Activated CD4-positive, alpha-beta T cell treated with anti-CD3 and anti-CD28 coated beads for 36 hours (primary cell): ENCODE measurements at regions of chr9 and their contacts with region 1.

Region 1: GRCh38 chr9:111916234-111916645 is 19.6 kb downstream of the UGCG start:
- DNase-seq: peak; percentile 63
- ATAC-seq: peak; percentile 85
- H3K4me3 Mint-ChIP-seq: peak overlapping the region; percentile 39
- H3K27ac Mint-ChIP-seq: peak overlapping the region; percentile 69
- H3K4me1 Mint-ChIP-seq: peaks cover 56% of the 10 kb centered on the region
- H3K27me3 Mint-ChIP-seq: no peaks in the 10 kb centered on the region

Region 2: DNA sequence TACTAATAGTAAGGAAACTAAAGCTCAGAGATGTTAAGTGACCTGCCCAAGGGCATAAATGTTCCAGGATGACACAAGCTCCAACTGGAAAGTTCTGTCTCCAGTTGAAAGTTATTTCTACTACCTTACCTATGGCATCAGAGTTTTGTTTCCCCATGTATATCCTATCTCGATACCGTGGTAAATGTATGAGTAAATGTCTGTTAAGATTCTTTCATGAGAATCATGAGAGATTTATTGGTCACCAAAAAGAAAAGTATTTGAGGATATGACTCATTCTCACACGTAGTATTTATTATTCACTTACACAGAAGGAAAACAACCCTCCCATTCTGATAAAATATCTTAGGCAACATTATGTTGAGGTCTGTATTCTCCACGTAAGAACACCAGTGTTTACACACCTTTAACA is 110.4 kb before region 1 on chr9:
- CTCF ChIA-PET with region 1: no interaction called
- POLR2A ChIA-PET with region 1: interaction called, 3 read pairs
- intact Hi-C with region 1: loop called in 1 of 2 experiments (anchors 10 kb)
- DNase-seq: no peak
- ATAC-seq: peak; percentile 66
- H3K4me3 Mint-ChIP-seq: no peak overlapping the region
- H3K27ac Mint-ChIP-seq: peak overlapping the region; percentile 41
- H3K4me1 Mint-ChIP-seq: peaks cover 30% of the 10 kb centered on the region
- H3K27me3 Mint-ChIP-seq: no peaks in the 10 kb centered on the region

Region 3: DNA sequence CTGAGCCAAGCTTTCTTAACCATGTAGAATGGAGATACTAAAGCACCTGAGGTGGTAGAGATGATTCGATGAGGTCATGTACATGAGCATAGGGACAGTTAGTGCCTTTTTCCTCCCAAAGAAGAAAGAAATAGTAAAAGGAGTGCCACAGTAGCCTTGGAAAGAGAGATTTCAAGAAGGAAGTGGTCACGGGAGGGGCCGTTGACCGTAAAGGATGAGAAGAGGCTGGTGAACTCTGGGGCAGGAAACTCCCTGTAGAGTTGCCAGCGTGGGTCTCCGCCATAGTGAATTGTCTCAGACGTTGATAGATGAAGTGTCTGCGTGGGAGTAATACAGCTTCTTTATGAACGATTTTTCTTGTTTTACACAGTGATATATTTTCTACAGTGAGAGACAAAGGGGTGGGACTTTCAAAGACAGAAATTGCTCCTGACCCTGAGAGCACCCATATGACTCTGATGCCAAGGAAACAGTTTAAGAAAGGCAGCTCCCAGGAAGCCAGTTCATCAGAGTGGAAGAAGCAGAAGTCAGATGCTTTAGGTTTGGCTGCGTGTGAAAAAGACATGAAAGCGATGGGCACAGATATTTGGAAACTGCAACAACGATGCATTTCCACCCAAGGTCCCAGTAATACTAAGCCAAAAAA is 21.7 kb after region 1 on chr9:
- CTCF ChIA-PET with region 1: interaction called, 3 read pairs
- POLR2A ChIA-PET with region 1: no interaction called
- intact Hi-C with region 1: loop called (anchors 1 kb)
- DNase-seq: peak; percentile 83
- ATAC-seq: peak; percentile 92
- H3K4me3 Mint-ChIP-seq: peak overlapping the region; percentile 44
- H3K27ac Mint-ChIP-seq: peak overlapping the region; percentile 86
- H3K4me1 Mint-ChIP-seq: peaks cover 23% of the 10 kb centered on the region
- H3K27me3 Mint-ChIP-seq: no peaks in the 10 kb centered on the region

Region 4: DNA sequence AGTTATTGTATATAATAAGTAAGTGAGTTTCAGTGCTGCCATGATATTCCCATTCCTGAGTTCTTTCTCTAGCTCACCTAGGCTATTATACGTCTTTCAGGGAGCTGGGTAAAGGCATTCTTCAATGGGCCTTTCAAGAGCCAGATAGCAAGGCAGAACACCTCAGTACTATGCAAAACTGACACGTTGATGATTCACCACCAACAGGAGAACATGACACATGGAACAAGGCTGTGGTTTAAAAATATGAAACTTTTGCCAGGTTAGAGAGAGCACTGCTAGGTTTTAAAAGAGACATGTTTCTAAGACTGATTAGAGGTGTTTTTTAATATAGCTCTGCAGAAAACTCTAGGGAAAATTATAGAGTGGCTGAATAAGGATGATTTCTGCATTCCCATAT is 76.3 kb after region 1 on chr9:
- CTCF ChIA-PET with region 1: interaction called, 12 read pairs
- POLR2A ChIA-PET with region 1: interaction called, 8 read pairs
- intact Hi-C with region 1: loop called (anchors 1 kb)
- DNase-seq: peak; percentile 62
- ATAC-seq: peak; percentile 92
- H3K4me3 Mint-ChIP-seq: no peak overlapping the region
- H3K27ac Mint-ChIP-seq: no peak overlapping the region
- H3K4me1 Mint-ChIP-seq: peaks cover 34% of the 10 kb centered on the region
- H3K27me3 Mint-ChIP-seq: peaks cover 2% of the 10 kb centered on the region

Region 5: GRCh38 chr9:112028280-112029221 is 112.3 kb after region 1 on chr9:
- CTCF ChIA-PET with region 1: no interaction called
- POLR2A ChIA-PET with region 1: no interaction called
- intact Hi-C with region 1: loop called in 1 of 2 experiments (anchors 1 kb)
- DNase-seq: peak; percentile 53
- ATAC-seq: peak; percentile 78
- H3K4me3 Mint-ChIP-seq: no peak overlapping the region
- H3K27ac Mint-ChIP-seq: peak overlapping the region; percentile 1
- H3K4me1 Mint-ChIP-seq: peaks cover 45% of the 10 kb centered on the region
- H3K27me3 Mint-ChIP-seq: peaks cover 5% of the 10 kb centered on the region

Region 6: DNA sequence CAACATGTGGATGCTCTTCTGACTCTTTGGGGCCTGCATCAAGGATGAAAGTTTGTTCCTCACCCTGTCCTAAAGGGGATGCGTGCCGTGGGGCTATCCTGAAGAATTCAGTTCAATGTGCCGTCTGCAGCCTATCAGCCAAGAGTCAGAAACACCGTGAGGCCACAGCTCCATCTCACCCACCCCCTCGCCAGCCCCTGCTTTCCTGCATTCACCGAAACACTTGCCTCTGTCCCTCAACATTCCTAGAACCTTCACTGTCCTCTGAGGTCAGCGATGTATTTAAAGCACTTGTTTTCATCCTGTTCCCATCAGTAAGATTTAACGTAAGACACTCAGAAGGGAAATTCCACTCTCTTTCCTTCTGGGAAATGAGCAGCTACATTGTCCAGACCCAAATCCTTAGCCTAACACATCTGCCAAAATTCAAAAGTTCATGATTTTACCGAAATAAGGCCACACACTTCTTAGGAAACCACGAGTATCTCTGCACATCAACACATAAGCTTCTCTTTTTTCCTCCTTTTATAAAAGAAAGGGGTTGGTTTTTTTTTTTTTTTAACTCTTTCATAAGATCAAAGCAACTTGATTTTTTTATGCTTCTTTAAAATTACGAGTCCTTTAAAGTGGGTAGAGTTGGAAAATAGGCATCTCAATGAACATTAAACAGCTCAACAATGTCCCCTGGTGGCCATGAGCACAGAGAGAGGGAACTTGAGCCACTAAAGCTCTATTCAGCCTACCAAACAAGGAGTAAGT is 158.2 kb after region 1 on chr9:
- CTCF ChIA-PET with region 1: interaction called, 10 read pairs
- POLR2A ChIA-PET with region 1: no interaction called
- intact Hi-C with region 1: loop called in 1 of 2 experiments (anchors 5 kb)
- DNase-seq: peak; percentile 81
- ATAC-seq: peak; percentile 85
- H3K4me3 Mint-ChIP-seq: no peak overlapping the region
- H3K27ac Mint-ChIP-seq: peak overlapping the region; percentile 72
- H3K4me1 Mint-ChIP-seq: peaks cover 35% of the 10 kb centered on the region
- H3K27me3 Mint-ChIP-seq: peaks cover 4% of the 10 kb centered on the region